Tibial artery (tissue), 4 donors: ENCODE measurements at regions of chr6 and their contacts with region 1.

Region 1: DNA sequence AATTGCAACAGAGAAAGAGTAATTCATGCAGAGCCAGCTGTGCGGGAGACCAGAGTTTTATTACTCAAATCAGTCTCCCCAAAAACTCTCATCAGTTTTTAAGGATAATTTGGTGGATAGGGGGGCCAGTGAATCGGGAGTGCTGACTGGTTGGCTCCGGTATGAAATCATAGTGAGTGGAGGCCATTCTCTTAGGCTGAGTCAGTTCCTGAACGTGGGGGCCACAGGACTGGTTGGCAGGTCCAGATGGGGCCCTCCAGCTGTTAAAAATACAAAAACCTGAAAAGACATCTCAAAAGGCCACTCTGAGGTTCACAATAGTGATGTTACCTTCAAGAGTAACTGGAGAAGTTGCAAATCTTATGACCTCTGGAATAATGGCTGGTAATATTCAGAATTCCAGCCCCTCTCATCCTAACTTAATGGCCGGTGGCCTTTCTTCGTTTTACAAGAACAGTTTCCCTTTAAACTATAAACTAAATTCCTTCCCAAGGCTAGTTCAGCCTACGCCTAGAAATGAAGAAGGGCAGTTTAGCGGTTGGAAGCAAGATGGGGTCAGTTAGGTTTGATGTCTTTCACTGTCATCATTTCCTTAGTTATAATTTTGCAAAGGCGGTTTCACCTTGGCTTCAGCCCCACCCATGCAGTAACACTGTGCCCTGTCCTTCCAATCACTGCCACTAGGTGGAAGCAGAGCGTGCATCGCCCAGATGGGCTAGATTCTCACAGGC is 6.8 kb upstream of the MICA start:
- DNase-seq: peak; percentile 79 to 89
- H3K4me3 ChIP-seq: no peak overlapping the region
- H3K27ac ChIP-seq: no peak overlapping the region
- H3K4me1 ChIP-seq: peaks cover 0 to 26% (median 12%) of the 10 kb centered on the region in 4 donors
- H3K27me3 ChIP-seq: no peaks in the 10 kb centered on the region
- CTCF ChIP-seq: peak; percentile 79 to 90

Region 2: GRCh38 chr6:30037182-30037788 is 1359.3 kb before region 1 on chr6:
- intact Hi-C with region 1: no loop called
- DNase-seq: no peak
- H3K4me3 ChIP-seq: no peak overlapping the region
- H3K27ac ChIP-seq: no peak overlapping the region
- H3K4me1 ChIP-seq: no peaks in the 10 kb centered on the region
- H3K27me3 ChIP-seq: no peaks in the 10 kb centered on the region
- CTCF ChIP-seq: peak; percentile 15 to 18

Region 3: DNA sequence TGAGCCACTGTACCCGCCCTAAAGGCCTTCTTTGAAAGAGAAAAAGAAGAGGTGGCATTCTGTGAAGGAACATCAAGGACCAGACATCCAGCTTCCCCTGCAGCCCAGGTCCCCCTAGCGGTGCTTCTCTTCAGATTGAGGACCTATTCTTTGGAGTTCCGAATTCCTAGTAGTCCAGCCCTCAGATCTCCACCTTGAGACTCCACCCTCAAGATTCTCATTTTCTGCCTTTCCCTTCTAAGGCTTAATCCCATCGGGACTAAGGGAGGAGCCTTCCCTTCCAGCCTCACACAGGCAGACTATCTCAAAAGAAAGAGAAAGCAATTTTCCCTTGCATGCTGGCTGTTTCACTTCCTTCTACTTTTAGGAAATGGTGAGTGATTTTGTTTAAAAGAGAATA is 353.8 kb before region 1 on chr6:
- intact Hi-C with region 1: no loop called
- DNase-seq: no peak
- H3K4me3 ChIP-seq: no peak overlapping the region
- H3K27ac ChIP-seq: no peak overlapping the region
- H3K4me1 ChIP-seq: no peaks in the 10 kb centered on the region
- H3K27me3 ChIP-seq: peaks cover 0 to 12% of the 10 kb centered on the region in 2 donors
- CTCF ChIP-seq: peak; percentile 21 to 30

Region 4: DNA sequence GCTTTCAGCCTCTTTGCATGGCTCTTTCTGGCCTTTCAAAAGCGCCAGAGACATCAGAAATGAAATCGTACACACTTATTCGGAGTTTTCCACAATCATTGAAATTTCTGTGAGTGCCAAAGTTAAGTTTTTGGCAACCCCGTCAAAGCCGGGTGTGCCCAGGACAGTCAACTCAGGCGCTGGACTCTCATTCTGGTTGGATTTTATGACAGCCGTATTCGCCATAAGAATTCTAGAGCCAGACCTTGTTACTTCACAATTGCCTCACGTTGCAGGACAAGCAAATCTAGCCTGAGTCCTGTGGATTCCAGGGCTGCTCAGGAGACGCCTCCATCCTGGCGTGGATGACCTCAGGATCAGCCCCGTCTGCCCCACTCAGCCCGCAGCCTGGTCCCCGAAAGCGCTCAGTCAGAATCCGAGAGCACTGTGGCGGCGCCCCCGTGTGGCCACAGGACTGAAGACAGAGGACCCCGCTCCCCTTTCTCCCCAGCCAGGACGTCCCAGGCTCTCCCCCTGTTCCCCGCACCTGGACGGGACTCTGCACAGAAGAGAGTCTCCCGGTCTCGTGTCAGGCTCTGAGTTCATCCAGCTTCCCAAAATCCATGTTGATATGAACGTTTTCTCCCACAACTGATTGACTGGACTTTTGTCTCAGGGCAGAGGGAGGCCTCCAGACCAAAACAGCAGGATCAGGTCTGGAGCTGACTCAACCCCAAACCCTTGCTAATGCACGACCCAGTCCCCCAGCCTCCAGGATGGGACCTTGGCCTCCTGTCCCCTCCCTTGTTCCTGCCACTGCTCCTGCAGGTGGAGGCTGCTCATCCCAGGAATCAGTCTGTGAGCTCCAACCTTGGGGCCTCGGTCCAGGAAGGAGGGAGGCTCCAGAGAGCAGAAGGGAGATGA is 45.0 kb after region 1 on chr6:
- intact Hi-C with region 1: loop called (anchors 2 kb)
- DNase-seq: peak; percentile 86 to 88
- H3K4me3 ChIP-seq: peak overlapping the region in 1 of 2 donors; percentile 41
- H3K27ac ChIP-seq: no peak overlapping the region
- H3K4me1 ChIP-seq: peaks cover 0 to 8% (median 1%) of the 10 kb centered on the region in 4 donors
- H3K27me3 ChIP-seq: no peaks in the 10 kb centered on the region
- CTCF ChIP-seq: peak; percentile 79 to 91